ENCODE measurements at regions of chr1 and their contacts with region 1.

Region 1: GRCh38 chr1:116873680-116874271 is 35.9 kb upstream of the PTGFRN start:
- DNase-seq: no peak
- ATAC-seq: peak; percentile 11
- H3K4me3 ChIP-seq: no peak overlapping the region
- H3K27ac ChIP-seq: no peak overlapping the region
- H3K4me1 ChIP-seq: peaks cover 8% of the 10 kb centered on the region; the same call in 1 of the 2 replicates
- H3K27me3 ChIP-seq: no peaks in the 10 kb centered on the region
- CTCF ChIP-seq: no peak
- EP300 ChIP-seq: no peak
- POLR2A ChIP-seq: no peak
- RAD21 ChIP-seq: no peak

Region 2: GRCh38 chr1:116853670-116854402 is 19.9 kb before region 1 on chr1:
- CTCF ChIA-PET with region 1: interaction called, 16 read pairs
- POLR2A ChIA-PET with region 1: interaction called, 12 read pairs
- RAD21 ChIA-PET with region 1: interaction called, 26 read pairs
- SMC1A ChIA-PET with region 1: interaction called, 122 read pairs
- in situ Hi-C with region 1: no loop called
- intact Hi-C with region 1: no loop called
- DNase-seq: no peak
- ATAC-seq: peak; percentile 81
- H3K4me3 ChIP-seq: no peak overlapping the region
- H3K27ac ChIP-seq: no peak overlapping the region
- H3K4me1 ChIP-seq: 0 out of 2 replicates have a peak, but pooled peaks cover 3% of the 10 kb centered on the region
- H3K27me3 ChIP-seq: no peaks in the 10 kb centered on the region
- CTCF ChIP-seq: no peak
- EP300 ChIP-seq: no peak
- POLR2A ChIP-seq: no peak
- RAD21 ChIP-seq: no peak

Region 3: DNA sequence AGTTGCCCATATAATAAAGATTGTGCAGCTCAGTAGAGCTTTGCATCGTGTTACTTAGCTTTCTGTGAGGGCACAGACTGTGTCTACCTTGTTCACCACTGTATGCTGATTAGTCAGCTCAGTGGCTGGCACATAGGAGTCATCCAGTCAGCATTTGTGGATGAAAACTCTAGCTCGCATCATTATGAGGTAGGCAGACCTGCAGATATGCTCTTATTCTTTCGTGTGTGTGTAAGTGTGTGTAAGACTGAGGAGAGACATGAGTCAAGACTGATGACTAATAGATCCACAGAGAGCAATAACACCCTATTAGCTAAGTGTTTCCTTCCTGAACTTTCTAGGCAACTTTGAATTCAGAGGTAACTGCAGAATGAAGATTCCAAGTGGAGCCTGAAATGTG is 203.5 kb after region 1 on chr1:
- CTCF ChIA-PET with region 1: no interaction called
- POLR2A ChIA-PET with region 1: no interaction called
- RAD21 ChIA-PET with region 1: no interaction called
- SMC1A ChIA-PET with region 1: no interaction called
- in situ Hi-C with region 1: no loop called
- intact Hi-C with region 1: no loop called
- DNase-seq: no peak
- ATAC-seq: peak; percentile 27; the same call in 2 of the 3 replicates
- H3K4me3 ChIP-seq: no peak overlapping the region
- H3K27ac ChIP-seq: no peak overlapping the region
- H3K4me1 ChIP-seq: no peaks in the 10 kb centered on the region
- H3K27me3 ChIP-seq: no peaks in the 10 kb centered on the region
- CTCF ChIP-seq: no peak
- EP300 ChIP-seq: no peak
- POLR2A ChIP-seq: no peak
- RAD21 ChIP-seq: no peak

Region 4: GRCh38 chr1:117146570-117147346 is 273.0 kb after region 1 on chr1:
- CTCF ChIA-PET with region 1: no interaction called
- POLR2A ChIA-PET with region 1: no interaction called
- RAD21 ChIA-PET with region 1: no interaction called
- SMC1A ChIA-PET with region 1: no interaction called
- in situ Hi-C with region 1: no loop called
- intact Hi-C with region 1: no loop called
- DNase-seq: no peak
- ATAC-seq: no peak
- H3K4me3 ChIP-seq: no peak overlapping the region
- H3K27ac ChIP-seq: no peak overlapping the region
- H3K4me1 ChIP-seq: no peaks in the 10 kb centered on the region
- H3K27me3 ChIP-seq: peaks cover 0 to 3% of the 10 kb centered on the region in 2 experiments; a peak in 1 of 4 replicates
- CTCF ChIP-seq: no peak
- EP300 ChIP-seq: no peak
- POLR2A ChIP-seq: no peak
- RAD21 ChIP-seq: no peak

Region 5: DNA sequence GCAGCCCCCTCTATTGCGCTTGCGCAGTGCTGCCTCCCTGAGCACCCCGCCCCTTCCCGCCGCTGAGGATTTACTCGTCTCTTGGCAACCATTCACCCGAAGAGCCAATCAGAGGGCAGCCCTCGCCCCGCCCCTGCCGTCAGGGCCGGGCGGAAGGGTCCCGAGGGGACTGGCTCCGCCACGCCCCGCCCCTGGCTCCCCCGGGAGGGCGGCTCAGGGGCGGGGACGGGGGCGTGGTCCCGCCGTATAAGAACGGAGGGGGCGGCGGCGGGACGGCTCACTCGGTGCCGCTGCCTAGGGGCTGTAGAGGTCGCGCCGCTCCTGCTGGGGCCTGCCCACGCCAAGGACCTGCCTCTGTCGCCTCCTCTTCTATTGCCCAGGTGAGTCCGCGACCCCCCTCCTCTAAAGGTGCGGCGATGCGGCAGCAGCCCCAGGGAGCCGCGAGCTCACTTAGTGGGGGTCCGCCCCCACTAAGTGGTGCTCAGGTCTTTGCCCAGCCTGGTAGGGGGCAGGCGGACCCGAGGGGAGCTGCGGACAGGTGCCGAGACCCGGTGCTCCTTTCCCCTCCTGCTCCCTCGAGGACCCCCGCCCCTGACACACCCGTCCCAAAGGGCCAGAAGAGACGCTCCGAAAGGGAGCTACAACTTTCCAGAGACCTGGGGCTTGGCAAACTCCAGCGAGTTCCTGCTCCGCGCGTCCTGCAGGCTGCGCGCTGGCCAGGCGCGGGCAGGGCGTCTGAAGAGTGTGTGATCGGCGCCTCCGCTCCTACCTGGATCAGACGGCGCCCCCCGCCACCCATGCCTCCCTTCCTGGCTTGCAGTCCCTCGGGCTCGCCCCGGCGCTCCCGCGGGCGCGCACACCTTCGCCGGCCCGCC is 732.2 kb after region 1 on chr1 and contains the start of gene TENT5C:
- CTCF ChIA-PET with region 1: no interaction called
- POLR2A ChIA-PET with region 1: no interaction called
- RAD21 ChIA-PET with region 1: no interaction called
- SMC1A ChIA-PET with region 1: no interaction called
- in situ Hi-C with region 1: no loop called
- intact Hi-C with region 1: no loop called
- DNase-seq: peak; percentile 54
- ATAC-seq: peak; percentile 92
- H3K4me3 ChIP-seq: peak within 1 kb of the TSS; percentile 62
- H3K27ac ChIP-seq: no peak within 1 kb of the TSS
- H3K4me1 ChIP-seq: peaks cover 11% of the 10 kb centered on the region
- H3K27me3 ChIP-seq: peaks cover 7 to 11% of the 10 kb centered on the region in 2 experiments; a peak in 2 of 4 replicates
- CTCF ChIP-seq: no peak
- EP300 ChIP-seq: no peak
- POLR2A ChIP-seq: peak; percentile 95
- RAD21 ChIP-seq: no peak
- polyA plus RNA-seq, gene TENT5C: 0.31 to 0.53 TPM